ENCODE measurements at regions of chr11 and their contacts with region 1.

Region 1: DNA sequence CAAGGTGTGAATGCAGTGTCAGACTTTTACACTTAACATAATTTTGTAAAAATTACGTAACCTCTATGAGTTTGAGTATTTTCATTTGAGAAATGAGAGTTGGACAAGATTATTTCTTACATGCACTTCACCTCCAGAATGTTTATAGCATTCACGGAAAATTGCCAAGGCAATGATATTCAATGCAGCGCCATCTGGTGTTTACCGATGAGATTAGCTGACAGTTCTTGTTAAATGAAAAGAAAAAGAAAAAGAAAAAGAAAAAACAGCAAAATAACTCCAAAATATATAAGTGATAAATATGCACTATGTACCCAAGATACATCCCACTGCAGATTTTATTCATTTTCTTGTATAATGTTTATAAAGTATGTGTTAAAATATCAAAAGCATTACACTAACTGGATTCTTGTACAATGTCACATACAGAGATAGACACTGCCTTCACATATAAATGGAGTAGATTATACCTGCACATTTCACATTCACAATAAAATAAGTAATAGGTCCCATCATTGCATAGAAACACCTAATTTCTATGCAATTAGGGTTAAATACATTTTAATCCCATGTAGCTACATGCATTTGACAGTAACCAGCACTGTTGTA is 976.3 kb upstream of the FAT3 start:
- DNase-seq: no peak
- H3K4me3 Mint-ChIP-seq: no peak overlapping the region
- H3K27ac Mint-ChIP-seq: no peak overlapping the region
- H3K4me1 Mint-ChIP-seq: no peaks in the 10 kb centered on the region
- H3K27me3 Mint-ChIP-seq: no peaks in the 10 kb centered on the region

Region 2: GRCh38 chr11:90250970-90251369 is 997.3 kb before region 1 on chr11:
- intact Hi-C with region 1: loop called (anchors 2 kb)
- DNase-seq: no peak
- H3K4me3 Mint-ChIP-seq: peak overlapping the region; percentile 81
- H3K27ac Mint-ChIP-seq: peak overlapping the region; percentile 49
- H3K4me1 Mint-ChIP-seq: peaks cover 14% of the 10 kb centered on the region
- H3K27me3 Mint-ChIP-seq: peaks cover 6% of the 10 kb centered on the region